GM12878 (cell line): ENCODE measurements at regions of chr9 and their contacts with region 1.

Region 1: DNA sequence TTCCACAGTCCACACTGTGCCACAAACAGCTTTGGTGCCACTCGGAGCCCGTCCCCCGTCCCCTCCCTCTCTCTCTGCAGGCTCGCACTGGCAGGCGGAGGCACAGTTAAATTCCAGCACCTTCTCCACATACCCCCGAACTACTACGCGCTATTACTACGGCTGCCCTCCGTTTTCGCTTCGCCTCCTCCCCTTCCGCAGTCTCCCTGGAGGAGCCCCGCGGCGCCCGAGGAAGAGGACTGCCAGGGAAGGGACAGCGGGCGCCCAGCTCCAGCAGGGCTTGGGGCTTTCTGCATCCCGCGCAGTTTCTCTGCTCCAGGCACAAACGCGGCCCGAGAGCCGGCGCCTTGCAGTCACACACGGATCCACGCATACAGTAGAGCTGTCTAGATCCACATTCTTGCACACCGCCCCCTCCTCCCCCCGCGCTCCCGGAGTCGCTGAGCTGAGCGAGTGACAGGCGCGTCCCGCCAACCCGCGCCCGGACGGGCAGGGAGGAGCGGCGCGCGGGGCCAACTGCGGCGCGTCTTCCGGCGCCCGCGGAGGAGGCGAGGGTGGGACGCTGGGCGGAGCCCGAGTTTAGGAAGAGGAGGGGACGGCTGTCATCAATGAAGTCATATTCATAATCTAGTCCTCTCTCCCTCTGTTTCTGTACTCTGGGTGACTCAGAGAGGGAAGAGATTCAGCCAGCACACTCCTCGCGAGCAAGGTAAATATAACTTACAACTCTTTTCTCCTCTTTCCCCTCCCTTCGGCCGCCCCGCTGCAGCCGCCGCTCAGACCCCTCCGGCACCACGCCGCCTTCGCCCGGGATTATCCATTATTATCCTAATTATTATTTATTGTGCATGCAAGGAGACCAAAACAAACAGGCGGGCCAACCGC is at the start of gene SMARCA2:
- DNase-seq: peak; percentile 86
- ATAC-seq: peak; percentile 81
- H3K4me3 ChIP-seq: peak within 1 kb of the TSS; percentile 95
- H3K27ac ChIP-seq: peak within 1 kb of the TSS; percentile 91
- H3K4me1 ChIP-seq: peaks cover 17% of the 10 kb centered on the region; the same call in 1 of the 2 replicates
- H3K27me3 ChIP-seq: no peaks in the 10 kb centered on the region
- CTCF ChIP-seq: no peak
- EP300 ChIP-seq: 0 out of 4 replicates have a peak, but pooled peaks of 1 of the 2 experiments have one; percentile 16
- POLR2A ChIP-seq: peak; percentile 98
- RAD21 ChIP-seq: no peak
- polyA plus RNA-seq, gene SMARCA2: 100 to 130 TPM

Region 2: DNA sequence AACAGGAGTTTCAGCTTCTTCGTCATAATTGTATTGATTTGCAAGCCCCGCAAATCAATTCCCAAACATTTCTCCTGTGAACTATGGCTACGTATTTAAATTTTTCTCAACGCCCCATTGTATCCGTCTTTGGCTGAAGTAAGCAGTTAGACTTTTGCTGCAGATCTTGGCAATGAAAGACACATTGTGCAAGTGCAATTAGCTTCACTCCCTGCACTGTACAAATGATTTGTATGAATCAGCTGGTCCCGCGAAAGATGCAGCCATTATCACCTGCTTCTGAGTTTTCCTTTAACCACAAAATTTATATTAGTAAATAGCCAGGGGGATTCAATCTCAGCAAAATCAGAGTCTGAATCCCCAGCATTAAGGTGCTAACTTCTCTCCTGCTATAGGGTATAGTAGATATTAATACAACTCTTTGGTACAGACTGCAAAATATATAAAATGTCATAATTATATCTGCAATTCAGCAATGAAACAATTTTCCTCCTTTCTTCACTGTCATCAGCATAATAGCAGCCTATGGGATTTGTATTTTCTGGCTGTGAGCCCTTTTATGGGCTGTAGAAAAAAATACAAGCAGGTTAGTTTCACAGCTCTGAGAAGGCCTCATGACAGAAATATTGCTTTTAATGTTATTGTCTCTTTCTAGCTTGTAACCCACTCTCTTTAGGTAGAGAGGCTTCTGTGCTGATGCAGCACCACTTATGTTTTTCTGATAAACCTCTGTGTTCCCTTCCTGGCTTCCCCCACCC is 68.2 kb before region 1 on chr9:
- CTCF ChIA-PET with region 1: interaction called, 22 read pairs
- POLR2A ChIA-PET with region 1: interaction called, 4 read pairs
- RAD21 ChIA-PET with region 1: interaction called, 5 read pairs
- SMC1A ChIA-PET with region 1: interaction called, 27 read pairs
- in situ Hi-C with region 1: no loop called
- intact Hi-C with region 1: no loop called
- DNase-seq: no peak
- ATAC-seq: peak; percentile 39; the same call in 2 of the 3 replicates
- H3K4me3 ChIP-seq: no peak overlapping the region
- H3K27ac ChIP-seq: no peak overlapping the region
- H3K4me1 ChIP-seq: no peaks in the 10 kb centered on the region
- H3K27me3 ChIP-seq: no peaks in the 10 kb centered on the region
- CTCF ChIP-seq: no peak
- EP300 ChIP-seq: no peak
- POLR2A ChIP-seq: no peak
- RAD21 ChIP-seq: no peak

Region 3: DNA sequence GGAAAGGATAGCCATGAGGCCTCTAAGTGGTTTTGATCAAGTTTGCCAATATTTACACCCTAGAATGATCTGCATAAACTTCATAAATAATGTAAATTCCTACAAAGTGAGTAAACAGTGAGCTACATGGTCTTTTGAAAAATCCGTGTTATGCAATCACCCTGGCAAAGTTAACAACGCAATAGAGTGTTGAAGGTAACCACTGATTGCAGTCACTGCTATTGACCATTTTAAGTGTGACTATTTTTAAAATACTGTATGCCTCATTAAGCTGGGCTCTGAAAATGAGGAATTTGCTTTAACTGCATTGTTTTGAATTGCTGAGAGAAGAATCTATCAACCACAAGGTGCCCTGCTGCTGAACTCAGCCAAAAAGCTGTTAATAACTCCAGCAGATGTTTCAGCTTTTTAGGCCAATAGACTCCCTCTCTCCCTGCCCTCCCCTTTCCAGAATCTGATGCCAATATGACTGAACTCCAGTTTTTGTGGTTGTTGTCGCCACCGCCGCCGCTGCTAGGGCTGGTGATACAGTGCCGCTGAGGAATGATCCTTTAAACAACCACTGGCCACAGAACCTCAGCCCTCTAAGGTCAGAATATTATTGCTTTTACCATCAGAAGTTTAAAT is 35.1 kb before region 1 on chr9:
- CTCF ChIA-PET with region 1: interaction called, 4 read pairs
- POLR2A ChIA-PET with region 1: interaction called, 3 read pairs
- RAD21 ChIA-PET with region 1: interaction called, 7 read pairs
- SMC1A ChIA-PET with region 1: interaction called, 24 read pairs
- in situ Hi-C with region 1: no loop called
- intact Hi-C with region 1: loop called (anchors 2 kb)
- DNase-seq: peak; percentile 35
- ATAC-seq: peak; percentile 35
- H3K4me3 ChIP-seq: no peak overlapping the region
- H3K27ac ChIP-seq: no peak overlapping the region
- H3K4me1 ChIP-seq: 0 out of 2 replicates have a peak, but pooled peaks cover 4% of the 10 kb centered on the region
- H3K27me3 ChIP-seq: no peaks in the 10 kb centered on the region
- CTCF ChIP-seq: no peak
- EP300 ChIP-seq: peak in 1 of 2 experiments; percentile 50; a peak in 1 of 4 replicates
- POLR2A ChIP-seq: no peak
- RAD21 ChIP-seq: no peak

Region 4: GRCh38 chr9:2158111-2158610 is 143.2 kb after region 1 on chr9:
- CTCF ChIA-PET with region 1: interaction called, 3 read pairs
- POLR2A ChIA-PET with region 1: interaction called, 12 read pairs
- RAD21 ChIA-PET with region 1: no interaction called
- SMC1A ChIA-PET with region 1: interaction called, 3 read pairs
- in situ Hi-C with region 1: no loop called
- intact Hi-C with region 1: no loop called
- DNase-seq: peak; percentile 39
- ATAC-seq: peak; percentile 78
- H3K4me3 ChIP-seq: peak overlapping the region; percentile 79
- H3K27ac ChIP-seq: peak overlapping the region; percentile 75
- H3K4me1 ChIP-seq: peaks cover 8% of the 10 kb centered on the region; the same call in 1 of the 2 replicates
- H3K27me3 ChIP-seq: no peaks in the 10 kb centered on the region
- CTCF ChIP-seq: no peak
- EP300 ChIP-seq: 0 out of 4 replicates have a peak, but pooled peaks of 1 of the 2 experiments have one; percentile 10
- POLR2A ChIP-seq: no peak
- RAD21 ChIP-seq: no peak